ENCODE measurements at regions of chrX and their contacts with region 1.

Region 1: GRCh38 chrX:57821703-57822375 is 88.4 kb downstream of the ZXDA start:
- DNase-seq: peak in 1 of 2 donors; percentile 67
- H3K4me3 ChIP-seq: peak overlapping the region in 3 of 4 donors; percentile 7 to 10 (median 9)
- H3K27ac ChIP-seq: no peak overlapping the region
- H3K4me1 ChIP-seq: no peaks in the 10 kb centered on the region
- H3K27me3 ChIP-seq: no peaks in the 10 kb centered on the region
- CTCF ChIP-seq: peak in 5 of 7 experiments; percentile 27 to 69 (median 52)
- EP300 ChIP-seq: no peak
- POLR2A ChIP-seq: no peak

Region 2: DNA sequence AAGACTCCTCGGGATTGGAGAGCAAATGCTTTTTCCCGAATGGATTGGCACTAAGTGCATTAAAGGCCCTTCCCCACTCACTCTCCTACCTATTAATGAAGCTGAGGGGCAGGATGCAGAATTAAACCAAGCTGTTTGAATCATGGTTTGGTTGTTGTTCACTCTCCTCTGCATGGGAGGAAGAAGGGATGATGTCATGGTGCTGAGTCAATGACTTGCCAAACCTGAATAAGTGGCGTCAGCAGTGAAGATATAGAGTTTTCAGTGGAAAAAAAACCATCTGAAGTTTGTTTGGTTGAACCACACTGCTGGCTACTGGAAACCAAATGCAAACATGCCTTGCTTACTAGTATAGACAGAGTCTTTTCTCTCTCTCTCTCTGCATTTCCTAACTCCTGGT is 108.2 kb after region 1 on chrX:
- intact Hi-C with region 1: loop called (anchors 5 kb)
- DNase-seq: no peak
- H3K4me3 ChIP-seq: no peak overlapping the region
- H3K27ac ChIP-seq: no peak overlapping the region
- H3K4me1 ChIP-seq: no peaks in the 10 kb centered on the region
- H3K27me3 ChIP-seq: no peaks in the 10 kb centered on the region
- CTCF ChIP-seq: no peak
- EP300 ChIP-seq: no peak
- POLR2A ChIP-seq: no peak

Measured in stomach (tissue), 19 donors.